ENCODE measurements at regions of chr19 and their contacts with region 1.

Region 1: GRCh38 chr19:2229103-2230028 is 6.8 kb downstream of the PLEKHJ1 start:
- DNase-seq: no peak
- H3K27ac ChIP-seq: peak overlapping the region; percentile 95
- CTCF ChIP-seq: no peak

Region 2: GRCh38 chr19:2151339-2152229 is 77.8 kb before region 1 on chr19 and contains the start of gene AP3D1:
- CTCF ChIA-PET with region 1: interaction called, 16 read pairs
- POLR2A ChIA-PET with region 1: no interaction called
- DNase-seq: peak; percentile 99
- H3K27ac ChIP-seq: peak within 1 kb of the TSS; percentile 82
- CTCF ChIP-seq: no peak